ENCODE measurements at regions of chr14 and their contacts with region 1.

Region 1: DNA sequence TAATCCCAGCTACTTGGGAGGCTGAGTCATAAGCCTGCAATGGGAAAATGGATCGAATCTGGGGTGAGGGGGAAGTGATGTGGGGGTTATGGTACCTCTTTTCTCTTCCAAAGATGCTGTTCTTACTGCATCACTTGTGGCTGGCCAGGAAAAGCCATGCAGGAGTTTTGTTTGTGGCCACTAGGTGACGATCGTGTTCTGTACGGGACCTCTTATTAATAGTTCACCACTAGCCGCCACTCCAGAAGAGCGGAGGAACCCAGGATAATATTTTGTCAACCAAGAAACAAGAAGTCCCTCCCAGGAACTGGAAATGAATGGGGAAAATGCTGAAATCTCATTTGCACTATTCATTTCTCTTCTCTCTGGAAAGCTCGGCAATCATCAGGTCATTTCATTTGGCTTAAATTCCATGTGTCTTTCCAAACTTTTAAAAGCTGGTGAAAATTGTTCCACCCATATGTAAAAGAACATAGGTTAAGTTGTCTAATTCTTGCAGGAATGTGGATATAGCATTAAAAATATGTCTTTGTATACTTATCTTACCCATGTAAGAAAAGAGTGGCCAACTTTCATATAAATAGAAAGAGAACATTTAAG is 8.9 kb downstream of the GPR65 start:
- DNase-seq: no peak
- ATAC-seq: peak; percentile 83
- H3K4me3 Mint-ChIP-seq: no peak overlapping the region
- H3K27ac Mint-ChIP-seq: peak overlapping the region; percentile 2
- H3K4me1 Mint-ChIP-seq: peaks cover 42% of the 10 kb centered on the region
- H3K27me3 Mint-ChIP-seq: no peaks in the 10 kb centered on the region
- CTCF ChIP-seq: peak; percentile 39

Region 2: DNA sequence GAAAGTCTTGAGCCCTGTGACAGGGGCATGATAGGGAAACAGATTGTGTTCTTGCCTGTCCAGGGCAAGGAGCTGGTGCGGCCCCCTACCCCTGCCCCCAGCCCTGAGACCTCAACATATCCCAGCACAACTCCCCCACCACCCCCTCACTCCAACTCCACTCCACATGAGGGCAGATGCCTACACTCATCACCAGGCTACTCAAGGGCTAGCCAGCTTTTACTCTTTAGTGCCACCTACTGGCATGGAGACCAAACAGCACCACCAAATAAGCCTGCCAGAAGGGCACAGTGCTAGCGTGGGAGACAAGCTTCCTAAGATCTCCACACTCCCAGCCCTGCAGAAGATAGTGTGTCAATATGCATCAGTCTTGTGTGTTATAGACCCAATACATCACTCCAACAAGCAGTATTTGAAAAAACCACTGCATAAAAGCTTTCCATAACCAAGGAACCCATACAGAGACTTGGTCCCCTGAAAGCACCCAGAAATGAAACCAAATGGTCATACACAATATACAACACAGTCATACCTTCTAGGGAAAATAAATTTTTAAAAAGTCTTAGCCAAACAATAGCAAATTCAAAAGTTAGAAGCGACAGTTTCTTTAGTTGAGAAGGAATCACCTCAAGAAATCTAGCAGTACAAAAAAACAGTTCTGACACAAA is 154.8 kb after region 1 on chr14:
- CTCF ChIA-PET with region 1: interaction called, 33 read pairs
- POLR2A ChIA-PET with region 1: no interaction called
- intact Hi-C with region 1: loop called (anchors 1 kb)
- DNase-seq: no peak
- ATAC-seq: peak; percentile 92
- H3K4me3 Mint-ChIP-seq: no peak overlapping the region
- H3K27ac Mint-ChIP-seq: no peak overlapping the region
- H3K4me1 Mint-ChIP-seq: peaks cover 4% of the 10 kb centered on the region
- H3K27me3 Mint-ChIP-seq: peaks cover 33% of the 10 kb centered on the region
- CTCF ChIP-seq: no peak

Region 3: GRCh38 chr14:88189417-88190191 is 175.8 kb after region 1 on chr14:
- CTCF ChIA-PET with region 1: interaction called, 11 read pairs
- POLR2A ChIA-PET with region 1: no interaction called
- intact Hi-C with region 1: no loop called
- DNase-seq: no peak
- ATAC-seq: peak; percentile 71
- H3K4me3 Mint-ChIP-seq: peak overlapping the region; percentile 56
- H3K27ac Mint-ChIP-seq: no peak overlapping the region
- H3K4me1 Mint-ChIP-seq: peaks cover 7% of the 10 kb centered on the region
- H3K27me3 Mint-ChIP-seq: peaks cover 8% of the 10 kb centered on the region
- CTCF ChIP-seq: no peak

Region 4: GRCh38 chr14:88233915-88234314 is 220.1 kb after region 1 on chr14:
- CTCF ChIA-PET with region 1: no interaction called
- POLR2A ChIA-PET with region 1: no interaction called
- intact Hi-C with region 1: loop called (anchors 5 kb)
- DNase-seq: no peak
- ATAC-seq: no peak
- H3K4me3 Mint-ChIP-seq: no peak overlapping the region
- H3K27ac Mint-ChIP-seq: no peak overlapping the region
- H3K4me1 Mint-ChIP-seq: no peaks in the 10 kb centered on the region
- H3K27me3 Mint-ChIP-seq: peaks cover 11% of the 10 kb centered on the region
- CTCF ChIP-seq: no peak

Region 5: GRCh38 chr14:88380405-88380804 is 366.6 kb after region 1 on chr14:
- CTCF ChIA-PET with region 1: interaction called, 4 read pairs
- POLR2A ChIA-PET with region 1: no interaction called
- intact Hi-C with region 1: loop called (anchors 1 kb)
- DNase-seq: no peak
- ATAC-seq: no peak
- H3K4me3 Mint-ChIP-seq: no peak overlapping the region
- H3K27ac Mint-ChIP-seq: no peak overlapping the region
- H3K4me1 Mint-ChIP-seq: peaks cover 7% of the 10 kb centered on the region
- H3K27me3 Mint-ChIP-seq: peaks cover 2% of the 10 kb centered on the region
- CTCF ChIP-seq: no peak

Measured in activated B cell treated with CpG ODN at 0.5 μM for 24 hours (primary cell).